Activated naive CD4-positive, alpha-beta T cell treated with anti-CD3 and anti-CD28 coated beads, Interleukin-2, amount 10 ng/mL, durations not matched to agents 7 days and 5 days (primary cell): ENCODE measurements at regions of chr12 and their contacts with region 1.

Region 1: DNA sequence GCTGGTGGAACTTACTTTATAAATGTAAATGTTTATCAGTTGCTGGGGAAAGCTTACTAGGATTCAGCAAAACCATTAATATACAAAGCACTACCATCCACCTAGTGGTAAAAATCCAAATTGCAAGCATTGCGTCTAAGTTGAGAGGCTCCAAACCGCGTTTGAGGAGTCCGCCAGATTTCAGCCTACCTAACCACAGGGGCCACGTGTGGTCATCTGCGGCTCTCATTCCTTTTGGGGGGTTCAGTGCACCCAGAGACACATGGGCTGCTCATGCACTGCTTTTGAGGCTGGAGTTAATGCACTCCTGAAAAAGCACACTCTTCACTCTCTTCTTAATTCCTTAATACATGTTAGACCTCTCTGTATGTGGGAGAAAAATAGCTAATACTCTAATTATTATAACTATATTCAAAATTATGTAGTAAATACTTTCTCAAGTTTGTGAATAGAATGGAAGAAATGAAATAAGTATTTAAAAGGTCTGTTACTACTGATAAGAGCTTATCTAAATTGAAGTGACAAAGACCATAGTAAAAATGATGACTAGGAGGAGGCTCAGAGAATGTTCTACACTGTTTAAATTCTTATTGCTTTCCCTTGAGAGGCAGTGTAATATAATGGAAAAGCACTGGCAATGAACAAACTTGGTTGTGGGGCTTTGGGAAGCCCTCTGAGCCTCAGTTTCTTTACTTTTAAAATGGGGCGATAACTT is 41.4 kb upstream of the MANSC4 start:
- DNase-seq: peak; percentile 38
- H3K4me3 Mint-ChIP-seq: no peak overlapping the region
- H3K27ac Mint-ChIP-seq: peak overlapping the region; percentile 37
- H3K4me1 Mint-ChIP-seq: peaks cover 42% of the 10 kb centered on the region
- H3K27me3 Mint-ChIP-seq: peaks cover 17% of the 10 kb centered on the region

Region 2: DNA sequence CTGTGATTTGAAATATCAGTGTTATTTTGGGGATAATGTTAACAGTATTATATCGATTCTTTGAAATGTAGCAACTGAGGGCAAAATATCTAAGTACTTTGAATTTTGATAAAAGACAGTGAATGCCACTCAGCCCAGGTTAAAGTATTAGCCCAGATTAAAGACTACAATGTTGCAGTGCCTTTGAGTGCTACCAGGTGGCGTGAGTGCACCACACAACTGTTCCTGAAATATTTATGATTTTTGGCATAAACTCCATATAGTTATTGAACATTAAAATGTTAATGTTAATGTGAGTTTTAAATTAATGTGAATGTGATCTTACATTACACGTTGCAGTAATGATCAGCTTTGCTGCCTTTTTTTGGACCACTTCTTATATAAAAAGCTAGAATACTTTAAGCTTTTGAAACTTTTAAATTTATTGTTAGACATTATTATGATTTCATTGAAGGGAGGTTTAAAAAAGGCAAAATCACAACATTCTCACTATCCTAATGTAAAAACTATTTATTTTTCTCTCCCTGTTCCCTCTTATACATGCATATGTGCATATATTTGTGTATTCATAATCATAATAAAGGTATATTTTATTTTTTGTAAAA is 88.3 kb before region 1 on chr12:
- CTCF ChIA-PET with region 1: interaction called, 106 read pairs
- DNase-seq: peak; percentile 52
- H3K4me3 Mint-ChIP-seq: no peak overlapping the region
- H3K27ac Mint-ChIP-seq: no peak overlapping the region
- H3K4me1 Mint-ChIP-seq: no peaks in the 10 kb centered on the region
- H3K27me3 Mint-ChIP-seq: no peaks in the 10 kb centered on the region

Region 3: GRCh38 chr12:27779920-27780611 is 41.4 kb before region 1 on chr12 and contains the starts of genes KLHL42 and MANSC4:
- CTCF ChIA-PET with region 1: interaction called, 19 read pairs
- DNase-seq: peak; percentile 83
- H3K4me3 Mint-ChIP-seq: peak within 1 kb of the TSS; percentile 78
- H3K27ac Mint-ChIP-seq: peak within 1 kb of the TSS; percentile 79
- H3K4me1 Mint-ChIP-seq: peaks cover 42% of the 10 kb centered on the region
- H3K27me3 Mint-ChIP-seq: peaks cover 12% of the 10 kb centered on the region

Region 4: DNA sequence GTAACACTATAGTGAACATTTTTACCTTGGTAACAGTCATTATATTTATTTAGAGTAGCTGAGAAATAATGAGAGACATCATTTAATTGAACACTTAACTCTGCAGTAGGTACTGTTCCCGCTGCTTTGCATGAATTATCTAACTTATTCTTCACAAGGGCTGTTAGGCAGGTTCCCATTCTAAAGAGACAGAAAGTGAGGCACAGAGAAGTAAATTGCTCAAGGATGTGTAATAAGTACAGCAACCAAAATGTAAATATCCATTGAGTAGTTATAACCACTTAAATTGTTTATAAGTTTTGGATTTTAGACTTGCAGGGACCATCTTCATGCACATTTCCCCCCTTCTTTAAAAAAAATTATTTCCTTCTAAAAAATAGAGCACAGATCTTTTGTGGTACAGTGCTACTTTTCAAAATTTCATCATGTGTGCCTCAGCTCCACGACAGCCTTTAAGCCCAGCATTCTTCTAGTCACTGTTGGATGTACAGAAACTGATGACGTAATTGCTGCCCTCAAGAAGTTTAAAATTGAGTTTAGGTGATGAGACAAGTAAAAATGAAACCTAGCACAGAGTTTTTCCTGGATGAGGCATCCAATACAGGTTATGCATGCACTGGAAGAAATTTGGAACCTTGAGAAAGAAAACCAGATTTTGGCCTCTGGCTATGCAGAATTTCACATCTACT is 35.4 kb before region 1 on chr12:
- CTCF ChIA-PET with region 1: interaction called, 19 read pairs
- DNase-seq: no peak
- H3K4me3 Mint-ChIP-seq: no peak overlapping the region
- H3K27ac Mint-ChIP-seq: peak overlapping the region; percentile 9
- H3K4me1 Mint-ChIP-seq: peaks cover 36% of the 10 kb centered on the region
- H3K27me3 Mint-ChIP-seq: no peaks in the 10 kb centered on the region

Region 5: GRCh38 chr12:27794818-27795584 is 26.4 kb before region 1 on chr12:
- CTCF ChIA-PET with region 1: interaction called, 31 read pairs
- DNase-seq: no peak
- H3K4me3 Mint-ChIP-seq: no peak overlapping the region
- H3K27ac Mint-ChIP-seq: peak overlapping the region; percentile 4
- H3K4me1 Mint-ChIP-seq: peaks cover 22% of the 10 kb centered on the region
- H3K27me3 Mint-ChIP-seq: no peaks in the 10 kb centered on the region

Region 6: GRCh38 chr12:27807063-27807703 is 14.2 kb before region 1 on chr12:
- CTCF ChIA-PET with region 1: interaction called, 17 read pairs
- DNase-seq: peak; percentile 56
- H3K4me3 Mint-ChIP-seq: peak overlapping the region; percentile 24
- H3K27ac Mint-ChIP-seq: peak overlapping the region; percentile 80
- H3K4me1 Mint-ChIP-seq: peaks cover 28% of the 10 kb centered on the region
- H3K27me3 Mint-ChIP-seq: peaks cover 37% of the 10 kb centered on the region